CD14-positive monocyte (primary cell): ENCODE measurements at regions of chr3 and their contacts with region 1.

Region 1: GRCh38 chr3:148991194-148992026 is at the start of gene GYG1:
- DNase-seq: peak; percentile 76 to 81 (median 77)
- H3K4me3 ChIP-seq: peak within 1 kb of the TSS; percentile 42 to 86 (median 85)
- H3K4me3 Mint-ChIP-seq: peak within 1 kb of the TSS; percentile 80 to 86
- H3K27ac ChIP-seq: peak within 1 kb of the TSS; percentile 69 to 92
- H3K27ac Mint-ChIP-seq: peak within 1 kb of the TSS; percentile 81 to 90 (median 88)
- H3K4me1 ChIP-seq: peaks cover 35 to 43% of the 10 kb centered on the region in 2 donors
- H3K4me1 Mint-ChIP-seq: peaks cover 42% of the 10 kb centered on the region
- H3K27me3 ChIP-seq: no peaks in the 10 kb centered on the region
- H3K27me3 Mint-ChIP-seq: no peaks in the 10 kb centered on the region
- CTCF ChIP-seq: no peak
- polyA plus RNA-seq, gene GYG1: 50.6 to 122 (median 121) TPM

Region 2: GRCh38 chr3:149129326-149130205 is 138.2 kb after region 1 on chr3 and contains the start of gene HPS3:
- intact Hi-C with region 1: loop called in 1 of 2 experiments (anchors 10 kb)
- DNase-seq: peak; percentile 94 to 96 (median 95)
- H3K4me3 ChIP-seq: peak within 1 kb of the TSS; percentile 70 to 95 (median 88)
- H3K4me3 Mint-ChIP-seq: peak within 1 kb of the TSS; percentile 95 to 99
- H3K27ac ChIP-seq: peak within 1 kb of the TSS; percentile 77 to 97
- H3K27ac Mint-ChIP-seq: peak within 1 kb of the TSS; percentile 89 to 97 (median 94)
- H3K4me1 ChIP-seq: peaks cover 27 to 39% of the 10 kb centered on the region in 2 donors
- H3K4me1 Mint-ChIP-seq: peaks cover 39% of the 10 kb centered on the region
- H3K27me3 ChIP-seq: no peaks in the 10 kb centered on the region
- H3K27me3 Mint-ChIP-seq: peaks cover 0 to 6% (median 2%) of the 10 kb centered on the region in 3 donors
- CTCF ChIP-seq: no peak
- polyA plus RNA-seq, gene HPS3: 20.8 to 35.8 (median 34.8) TPM